ENCODE measurements at regions of chr5 and their contacts with region 1.

Region 1: DNA sequence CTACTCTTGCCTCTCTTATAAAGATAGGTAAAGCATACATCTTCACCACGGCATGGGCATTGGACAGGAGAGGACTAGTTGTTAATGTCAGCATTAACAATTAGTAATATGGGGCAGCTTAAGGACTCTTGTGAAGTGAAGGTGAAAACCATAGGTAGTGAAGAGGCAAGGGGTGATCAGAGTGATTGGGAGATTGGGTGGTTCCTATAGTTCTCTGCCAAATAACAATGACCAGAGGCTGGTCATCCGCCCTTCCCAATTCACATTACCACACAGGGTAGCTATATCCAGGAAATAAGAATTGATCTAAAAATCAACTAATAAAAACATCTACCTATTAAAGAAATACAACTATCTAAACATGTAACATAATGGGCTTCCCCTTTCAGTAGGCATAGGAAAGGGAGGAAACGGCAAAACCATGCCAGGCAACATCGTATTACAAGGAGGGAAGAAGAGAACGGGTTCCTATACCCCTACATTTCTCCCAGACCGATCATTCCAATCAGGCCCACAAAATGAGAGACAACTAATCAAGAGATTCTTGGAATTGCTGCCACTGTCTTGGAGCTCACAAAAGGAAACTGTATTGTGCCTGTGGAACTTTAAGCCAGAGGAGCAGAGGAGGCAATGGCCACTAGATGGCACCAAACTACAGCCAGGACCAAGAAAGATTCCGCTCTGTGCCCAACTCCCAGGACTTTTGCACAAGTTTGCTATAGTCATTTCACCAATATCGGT is 121.6 kb downstream of the FBXL17 start:
- DNase-seq: peak; percentile 55
- CTCF ChIP-seq: peak; percentile 88

Region 2: GRCh38 chr5:107519900-107520354 is 740.4 kb before region 1 on chr5:
- CTCF ChIA-PET with region 1: no interaction called
- POLR2A ChIA-PET with region 1: no interaction called
- DNase-seq: no peak
- CTCF ChIP-seq: no peak

Region 3: GRCh38 chr5:108238936-108239887 is 21.1 kb before region 1 on chr5:
- CTCF ChIA-PET with region 1: interaction called, 44 read pairs
- POLR2A ChIA-PET with region 1: no interaction called
- DNase-seq: no peak
- CTCF ChIP-seq: no peak

Region 4: GRCh38 chr5:108295578-108296368 is 35.5 kb after region 1 on chr5:
- CTCF ChIA-PET with region 1: interaction called, 11 read pairs
- POLR2A ChIA-PET with region 1: no interaction called
- DNase-seq: no peak
- CTCF ChIP-seq: no peak

Region 5: GRCh38 chr5:108345541-108346171 is 85.4 kb after region 1 on chr5:
- CTCF ChIA-PET with region 1: interaction called, 60 read pairs
- POLR2A ChIA-PET with region 1: no interaction called
- DNase-seq: peak; percentile 19
- CTCF ChIP-seq: peak; percentile 33

Region 6: DNA sequence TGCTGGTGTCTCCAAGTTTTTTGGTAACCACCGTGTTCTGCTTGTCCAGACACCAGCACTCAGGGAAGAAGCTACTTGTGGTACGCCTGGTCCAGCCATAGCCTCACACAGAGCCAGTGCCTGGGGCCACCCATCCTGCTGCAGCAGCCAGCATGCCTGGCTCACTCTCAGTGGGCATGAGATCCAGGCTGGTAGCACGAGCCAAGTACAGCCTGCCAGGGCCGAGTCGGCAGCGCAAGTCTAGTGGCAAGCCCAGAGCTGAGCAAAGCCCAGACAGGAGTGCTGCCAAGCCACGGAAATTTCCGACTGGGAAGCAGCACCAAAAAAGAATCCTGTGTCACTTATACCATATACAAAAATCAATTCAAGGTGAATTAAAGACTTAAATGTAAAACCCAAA is 157.9 kb after region 1 on chr5:
- CTCF ChIA-PET with region 1: no interaction called
- POLR2A ChIA-PET with region 1: no interaction called
- DNase-seq: no peak
- CTCF ChIP-seq: no peak